Natural killer cell (primary cell): ENCODE measurements at regions of chr12 and their contacts with region 1.

Region 1: DNA sequence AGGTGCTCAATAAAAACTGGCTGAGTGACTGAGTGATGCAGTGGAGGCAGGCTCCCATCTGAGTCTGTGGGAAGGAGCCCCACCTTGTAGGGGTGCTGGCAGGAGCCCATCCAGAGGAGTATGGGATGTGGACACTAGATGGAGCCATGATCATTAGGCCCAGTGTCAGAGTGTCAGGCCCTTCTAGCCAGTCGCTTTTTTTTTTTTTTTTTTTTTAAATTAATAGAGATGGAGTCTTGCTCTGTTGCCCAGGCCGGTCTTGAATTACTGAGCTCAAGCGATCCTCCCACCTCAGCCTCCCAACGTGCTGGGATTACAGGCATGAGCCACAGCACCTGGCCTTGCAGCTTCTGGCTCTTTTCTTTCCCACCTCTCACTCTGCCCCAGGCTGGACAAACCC is 11.5 kb downstream of the RITA1 start:
- DNase-seq: peak in 1 of 2 donors; percentile 84
- ATAC-seq: peak; percentile 90 to 100 (median 100)
- H3K4me3 ChIP-seq: no peak overlapping the region
- H3K4me3 Mint-ChIP-seq: no peak overlapping the region
- H3K27ac ChIP-seq: no peak overlapping the region
- H3K27ac Mint-ChIP-seq: no peak overlapping the region
- H3K4me1 ChIP-seq: peaks cover 10% of the 10 kb centered on the region
- H3K4me1 Mint-ChIP-seq: no peaks in the 10 kb centered on the region
- H3K27me3 ChIP-seq: no peaks in the 10 kb centered on the region
- H3K27me3 Mint-ChIP-seq: no peaks in the 10 kb centered on the region
- CTCF ChIP-seq: peak; percentile 48

Region 2: GRCh38 chr12:113232840-113233585 is 36.0 kb after region 1 on chr12:
- intact Hi-C with region 1: loop called (anchors 5 kb)
- DNase-seq: peak; percentile 34 to 87
- ATAC-seq: peak; percentile 89 to 94 (median 92)
- H3K4me3 ChIP-seq: peak overlapping the region; percentile 15
- H3K4me3 Mint-ChIP-seq: peak overlapping the region; percentile 85
- H3K27ac ChIP-seq: peak overlapping the region; percentile 55
- H3K27ac Mint-ChIP-seq: peak overlapping the region in 1 of 2 donors; percentile 65
- H3K4me1 ChIP-seq: peaks cover 47% of the 10 kb centered on the region
- H3K4me1 Mint-ChIP-seq: peaks cover 12 to 19% of the 10 kb centered on the region in 2 donors
- H3K27me3 ChIP-seq: no peaks in the 10 kb centered on the region
- H3K27me3 Mint-ChIP-seq: no peaks in the 10 kb centered on the region
- CTCF ChIP-seq: no peak

Region 3: DNA sequence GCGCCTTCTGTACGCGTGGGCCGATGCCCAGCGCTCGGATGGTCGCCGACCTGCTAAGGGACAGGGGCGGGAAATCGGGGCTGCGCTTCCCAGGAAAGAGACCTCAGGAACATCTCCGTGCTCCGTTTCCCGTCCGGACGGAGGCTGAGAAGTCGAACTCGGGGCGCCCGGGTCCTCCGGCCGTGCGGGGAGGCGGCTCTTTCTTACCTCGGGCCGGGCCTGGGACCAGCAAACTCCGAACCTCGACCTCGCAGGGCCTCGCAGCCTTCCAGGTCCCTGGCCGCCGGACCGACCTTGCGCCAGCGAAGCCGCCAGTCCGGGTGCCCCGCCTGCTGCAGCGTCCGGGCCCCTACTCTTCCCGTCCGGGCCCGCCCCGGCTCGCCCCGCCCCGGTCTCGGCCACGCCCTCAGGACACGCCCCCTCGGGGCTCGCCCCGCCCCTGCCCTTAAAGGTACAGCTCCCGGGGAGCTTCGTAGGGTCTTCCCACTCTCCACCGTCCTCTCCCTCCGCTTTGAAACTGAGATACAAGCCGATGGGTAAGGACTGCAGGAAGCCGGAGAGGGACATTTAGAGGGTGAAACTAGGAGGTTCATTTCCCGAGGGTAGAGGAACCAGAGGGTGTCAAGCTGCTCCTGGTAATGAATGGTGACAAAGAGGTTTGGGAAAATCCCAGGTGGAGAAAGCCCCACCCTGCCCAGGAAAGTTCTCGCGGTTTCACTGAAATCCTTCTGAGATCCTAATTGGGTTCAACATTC is 138.0 kb after region 1 on chr12 and contains the start of gene SLC8B1:
- intact Hi-C with region 1: loop called (anchors 10 kb)
- DNase-seq: peak; percentile 84 to 86
- ATAC-seq: peak; percentile 99 to 100 (median 100)
- H3K4me3 ChIP-seq: peak within 1 kb of the TSS; percentile 83
- H3K4me3 Mint-ChIP-seq: peak within 1 kb of the TSS; percentile 93
- H3K27ac ChIP-seq: peak within 1 kb of the TSS; percentile 27
- H3K27ac Mint-ChIP-seq: peak within 1 kb of the TSS; percentile 57 to 74
- H3K4me1 ChIP-seq: peaks cover 30% of the 10 kb centered on the region
- H3K4me1 Mint-ChIP-seq: peaks cover 18 to 40% of the 10 kb centered on the region in 2 donors
- H3K27me3 ChIP-seq: no peaks in the 10 kb centered on the region
- H3K27me3 Mint-ChIP-seq: no peaks in the 10 kb centered on the region
- CTCF ChIP-seq: no peak
- total RNA-seq, gene SLC8B1: 26.1 to 34.4 (median 31.2) TPM